PC-9 (cell line): ENCODE measurements at regions of chr6 and their contacts with region 1.

Region 1: GRCh38 chr6:72968704-72969103 is 256.6 kb downstream of the KHDC1L start:
- DNase-seq: peak in 1 of 2 experiments; percentile 90
- H3K4me3 ChIP-seq: no peak overlapping the region
- H3K27ac ChIP-seq: peak overlapping the region; percentile 71
- H3K4me1 ChIP-seq: peaks cover 34% of the 10 kb centered on the region
- H3K27me3 ChIP-seq: no peaks in the 10 kb centered on the region
- CTCF ChIP-seq: no peak

Region 2: DNA sequence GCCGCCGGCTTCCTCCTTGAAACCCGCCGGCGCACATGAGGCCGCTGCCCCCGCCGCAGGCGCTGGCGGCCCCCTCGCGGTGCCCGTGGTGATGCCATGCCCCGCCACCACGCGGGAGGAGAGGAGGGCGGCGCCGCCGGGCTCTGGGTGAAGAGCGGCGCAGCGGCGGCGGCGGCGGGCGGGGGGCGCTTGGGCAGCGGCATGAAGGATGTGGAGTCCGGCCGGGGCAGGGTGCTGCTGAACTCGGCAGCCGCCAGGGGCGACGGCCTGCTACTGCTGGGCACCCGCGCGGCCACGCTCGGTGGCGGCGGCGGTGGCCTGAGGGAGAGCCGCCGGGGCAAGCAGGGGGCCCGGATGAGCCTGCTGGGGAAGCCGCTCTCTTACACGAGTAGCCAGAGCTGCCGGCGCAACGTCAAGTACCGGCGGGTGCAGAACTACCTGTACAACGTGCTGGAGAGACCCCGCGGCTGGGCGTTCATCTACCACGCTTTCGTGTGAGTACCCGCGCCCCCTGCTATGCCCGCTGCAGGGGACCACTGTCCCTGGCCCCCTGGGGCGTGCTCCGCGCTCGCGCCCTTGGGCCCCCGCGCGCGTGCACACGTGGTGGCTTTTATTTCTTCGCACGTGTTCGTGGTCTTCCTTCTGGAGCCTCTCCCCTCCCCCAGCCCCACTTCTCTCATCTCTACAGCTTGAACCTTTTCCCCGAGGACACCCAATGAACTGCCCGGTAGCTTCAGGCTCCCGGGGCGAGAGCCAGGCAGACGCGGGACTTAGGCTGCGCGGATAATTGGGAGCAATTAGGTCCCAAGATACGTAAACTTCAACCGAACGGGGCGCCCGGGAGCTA is 346.4 kb before region 1 on chr6:
- CTCF ChIA-PET with region 1: no interaction called
- POLR2A ChIA-PET with region 1: no interaction called
- intact Hi-C with region 1: loop called (anchors 5 kb)
- DNase-seq: peak in 1 of 2 experiments; percentile 45
- H3K4me3 ChIP-seq: peak overlapping the region; percentile 61
- H3K27ac ChIP-seq: no peak overlapping the region
- H3K4me1 ChIP-seq: no peaks in the 10 kb centered on the region
- H3K27me3 ChIP-seq: no peaks in the 10 kb centered on the region
- CTCF ChIP-seq: no peak

Region 3: GRCh38 chr6:72922401-72922800 is 46.3 kb before region 1 on chr6:
- CTCF ChIA-PET with region 1: no interaction called
- POLR2A ChIA-PET with region 1: no interaction called
- intact Hi-C with region 1: no loop called
- DNase-seq: no peak
- H3K4me3 ChIP-seq: no peak overlapping the region
- H3K27ac ChIP-seq: no peak overlapping the region
- H3K4me1 ChIP-seq: no peaks in the 10 kb centered on the region
- H3K27me3 ChIP-seq: no peaks in the 10 kb centered on the region
- CTCF ChIP-seq: no peak

Region 4: DNA sequence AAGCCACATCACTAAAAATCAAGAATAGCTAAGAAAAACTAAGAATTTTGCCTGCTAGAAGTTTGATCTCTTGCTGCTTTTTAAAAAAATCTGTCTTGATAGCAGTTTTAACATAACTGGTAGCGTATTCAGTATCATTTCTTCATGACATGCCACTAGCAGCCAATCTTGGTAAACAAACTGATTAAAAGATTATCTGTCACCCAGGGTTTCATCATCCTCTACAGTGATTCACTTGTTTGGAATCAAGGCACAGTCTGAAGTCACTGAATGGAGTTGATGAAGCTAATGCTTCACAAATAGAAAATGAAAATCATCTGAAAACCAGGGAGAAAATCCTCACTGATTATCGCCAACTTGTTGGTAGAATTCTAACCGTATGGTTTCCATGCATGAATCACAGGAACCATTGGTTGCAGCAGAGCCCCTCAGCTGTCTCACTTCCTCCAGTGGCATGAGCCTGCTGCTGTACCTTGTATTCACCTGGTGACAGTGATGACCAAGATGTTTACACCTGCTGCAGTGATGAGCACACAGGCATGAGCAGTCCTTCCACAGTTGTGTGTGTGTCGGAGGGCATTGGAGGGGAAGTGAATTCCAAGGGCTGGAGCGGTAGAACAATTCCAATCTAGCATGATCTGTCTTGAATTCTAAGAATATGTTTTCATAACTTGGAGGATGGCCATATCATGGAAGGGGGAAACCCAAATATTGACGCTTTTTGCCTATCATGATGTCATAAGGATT is 18.4 kb before region 1 on chr6:
- CTCF ChIA-PET with region 1: no interaction called
- POLR2A ChIA-PET with region 1: interaction called, 5 read pairs
- intact Hi-C with region 1: loop called (anchors 1 kb)
- DNase-seq: peak; percentile 40 to 87
- H3K4me3 ChIP-seq: peak overlapping the region; percentile 34
- H3K27ac ChIP-seq: peak overlapping the region; percentile 75
- H3K4me1 ChIP-seq: peaks cover 46% of the 10 kb centered on the region
- H3K27me3 ChIP-seq: no peaks in the 10 kb centered on the region
- CTCF ChIP-seq: no peak

Region 5: GRCh38 chr6:73032586-73032985 is 63.9 kb after region 1 on chr6:
- CTCF ChIA-PET with region 1: no interaction called
- POLR2A ChIA-PET with region 1: no interaction called
- intact Hi-C with region 1: loop called (anchors 1 kb)
- DNase-seq: peak; percentile 38 to 61
- H3K4me3 ChIP-seq: no peak overlapping the region
- H3K27ac ChIP-seq: peak overlapping the region; percentile 76
- H3K4me1 ChIP-seq: peaks cover 17% of the 10 kb centered on the region
- H3K27me3 ChIP-seq: no peaks in the 10 kb centered on the region
- CTCF ChIP-seq: no peak

Region 6: DNA sequence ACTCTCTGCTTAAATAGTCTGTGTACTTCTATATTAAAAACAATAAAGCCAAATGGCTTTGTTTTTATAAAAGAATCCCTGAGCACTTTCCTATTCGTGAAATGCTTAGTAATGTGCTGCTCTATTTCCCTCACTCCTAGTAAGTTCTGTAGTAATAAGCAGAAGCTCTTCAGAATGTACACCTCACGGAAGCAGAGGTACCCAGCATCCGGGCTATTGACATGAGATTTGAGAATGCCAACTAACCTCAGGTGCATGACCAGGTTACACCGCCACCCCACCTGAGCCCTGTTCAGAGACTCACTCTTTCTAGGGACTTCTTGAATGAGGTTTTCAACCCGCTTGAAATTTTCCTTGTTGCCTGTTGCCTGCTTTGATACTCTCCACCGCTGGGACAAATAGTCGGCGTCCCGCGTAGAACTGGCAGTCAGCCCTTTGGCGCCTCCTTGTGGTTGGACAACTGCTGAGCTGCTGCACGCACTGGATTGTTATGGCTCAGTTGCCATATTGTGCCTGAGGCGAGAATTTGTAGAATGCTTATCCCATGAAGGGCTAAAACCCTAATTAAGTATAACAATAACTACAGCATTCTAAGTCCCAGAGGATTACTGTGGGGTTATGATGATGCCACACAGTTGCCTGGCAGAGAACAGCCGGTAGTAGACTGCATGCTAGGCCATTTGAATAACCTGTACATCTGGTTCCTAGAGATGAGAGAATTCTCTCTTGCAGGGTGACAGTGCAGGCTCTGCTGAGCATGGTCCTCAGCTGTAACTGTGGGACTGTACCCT is 161.1 kb after region 1 on chr6:
- CTCF ChIA-PET with region 1: no interaction called
- POLR2A ChIA-PET with region 1: no interaction called
- intact Hi-C with region 1: loop called (anchors 2 kb)
- DNase-seq: peak; percentile 77 to 87
- H3K4me3 ChIP-seq: no peak overlapping the region
- H3K27ac ChIP-seq: no peak overlapping the region
- H3K4me1 ChIP-seq: no peaks in the 10 kb centered on the region; the same call in 1 of the 2 replicates
- H3K27me3 ChIP-seq: no peaks in the 10 kb centered on the region
- CTCF ChIP-seq: peak; percentile 97